Activated naive CD8-positive, alpha-beta T cell treated with anti-CD3 and anti-CD28 coated beads, Interleukin-2, amount 10 ng/mL, durations not matched to agents 7 days and 5 days (primary cell): ENCODE measurements at regions of chr19 and their contacts with region 1.

Region 1: GRCh38 chr19:11346092-11346940 is at the starts of genes CCDC159 and TMEM205:
- DNase-seq: peak; percentile 93
- ATAC-seq: peak; percentile 99
- H3K4me3 Mint-ChIP-seq: peak within 1 kb of the TSS; percentile 92
- H3K27ac Mint-ChIP-seq: peak within 1 kb of the TSS; percentile 90
- H3K4me1 Mint-ChIP-seq: peaks cover 22% of the 10 kb centered on the region
- H3K27me3 Mint-ChIP-seq: no peaks in the 10 kb centered on the region
- total RNA-seq, gene CCDC159: 36.2 to 40.7 TPM
- total RNA-seq, gene TMEM205: 29.4 to 35.2 TPM

Region 2: DNA sequence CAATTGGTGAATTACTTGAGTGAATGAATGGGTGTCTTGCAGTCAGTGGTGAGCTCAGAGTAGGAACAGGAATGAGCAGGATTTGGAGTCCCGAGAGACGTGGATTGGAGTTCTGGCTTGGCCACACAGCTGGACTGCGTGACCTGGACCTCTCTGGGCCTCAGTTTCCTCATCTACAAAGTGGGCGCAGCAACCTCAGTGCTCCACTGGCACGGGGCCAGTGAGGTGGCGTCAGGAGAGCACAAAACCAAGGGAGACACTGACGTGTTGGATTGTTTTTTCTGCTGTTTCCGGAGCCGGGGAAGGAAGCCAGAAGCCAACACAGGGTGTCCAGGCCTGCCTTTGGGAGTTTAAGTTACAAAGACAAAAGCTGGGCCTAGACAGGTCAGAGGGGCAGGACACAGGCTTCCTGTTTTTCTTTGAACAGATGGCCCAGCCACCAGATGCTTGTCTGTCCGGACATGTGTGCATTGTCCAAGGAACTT is 77.5 kb before region 1 on chr19:
- POLR2A ChIA-PET with region 1: no interaction called
- DNase-seq: no peak
- ATAC-seq: no peak
- H3K4me3 Mint-ChIP-seq: no peak overlapping the region
- H3K27ac Mint-ChIP-seq: no peak overlapping the region
- H3K4me1 Mint-ChIP-seq: peaks cover 5% of the 10 kb centered on the region
- H3K27me3 Mint-ChIP-seq: peaks cover 65% of the 10 kb centered on the region

Region 3: DNA sequence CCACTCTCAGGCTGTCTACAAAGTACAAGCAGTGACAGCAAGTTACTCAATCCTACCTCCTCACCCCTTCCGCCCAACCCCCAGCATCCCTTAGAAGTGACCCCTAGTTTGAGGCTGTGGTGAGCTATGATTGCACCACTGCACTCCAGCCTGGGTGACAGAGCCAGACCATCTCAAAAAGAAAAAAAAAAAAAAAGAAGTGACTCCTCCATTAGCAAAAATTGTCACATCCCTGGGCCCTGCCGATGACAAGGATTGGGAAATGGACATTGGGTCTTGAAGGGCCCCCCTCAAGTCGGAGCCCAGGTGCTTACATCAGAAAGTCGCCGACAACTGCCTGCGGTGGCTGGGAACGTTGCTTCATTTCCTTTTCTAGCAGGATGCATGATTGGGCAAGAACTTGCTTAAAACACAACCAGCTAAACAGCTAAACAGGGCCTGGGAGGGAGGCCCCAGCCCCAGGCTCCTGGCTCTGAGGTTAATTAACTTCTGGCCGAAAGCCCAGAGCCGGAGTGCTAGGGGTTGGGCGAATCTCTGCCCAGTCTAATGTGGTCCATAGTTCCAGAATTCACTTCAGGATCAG is 22.1 kb before region 1 on chr19:
- POLR2A ChIA-PET with region 1: interaction called, 13 read pairs
- DNase-seq: peak; percentile 67
- ATAC-seq: peak; percentile 89
- H3K4me3 Mint-ChIP-seq: peak overlapping the region; percentile 69
- H3K27ac Mint-ChIP-seq: peak overlapping the region; percentile 96
- H3K4me1 Mint-ChIP-seq: peaks cover 30% of the 10 kb centered on the region
- H3K27me3 Mint-ChIP-seq: peaks cover 3% of the 10 kb centered on the region